ENCODE measurements at regions of chr5 and their contacts with region 1.

Region 1: DNA sequence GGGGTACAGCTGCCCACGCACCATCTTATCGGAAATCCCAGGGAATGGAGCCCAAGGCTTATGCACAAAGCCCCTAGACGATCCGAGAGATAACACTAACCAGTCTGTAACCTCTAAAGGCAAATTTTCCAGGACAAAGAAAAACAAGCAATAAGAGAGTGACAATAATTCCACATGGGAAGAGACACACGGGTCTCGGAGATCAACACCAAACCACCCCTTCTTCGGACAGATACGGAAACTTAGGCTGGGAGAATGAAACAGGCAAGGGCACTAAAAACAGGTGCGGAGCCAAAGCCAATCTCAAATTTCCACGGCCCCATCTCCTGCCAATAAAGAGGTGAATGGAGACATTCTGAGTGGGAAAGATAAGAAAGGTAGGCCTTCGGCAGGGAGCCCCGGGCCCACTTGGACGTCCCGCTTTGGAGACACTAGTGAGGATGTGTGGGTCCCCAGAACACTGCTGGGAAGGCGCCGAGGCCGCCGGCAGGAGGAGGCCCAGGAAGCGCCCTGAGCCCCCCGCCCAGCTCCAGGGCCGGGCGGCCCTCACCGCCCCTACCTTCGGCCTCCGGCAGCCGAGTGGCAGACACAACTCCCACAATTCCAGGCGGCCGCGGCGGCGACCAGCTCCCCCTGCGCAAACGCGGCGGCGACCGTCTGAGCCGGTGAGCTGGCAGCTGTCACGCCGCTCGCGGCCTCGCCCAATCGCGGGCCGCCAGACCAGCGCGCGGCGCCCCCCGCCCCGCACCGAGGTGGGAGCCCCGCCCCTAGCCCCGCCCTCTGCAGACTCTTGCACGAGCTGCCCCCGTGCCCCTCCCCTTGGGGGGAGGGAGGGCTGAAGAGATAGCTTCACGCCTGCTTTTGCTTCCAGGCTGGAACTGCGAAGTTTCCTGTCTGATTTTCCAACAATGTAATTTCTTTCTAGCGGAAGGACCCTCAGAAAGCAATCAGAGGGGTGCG is at the start of gene SIL1:
- DNase-seq: peak; percentile 95 to 97
- ATAC-seq: peak; percentile 91 to 93
- H3K4me3 ChIP-seq: peak within 1 kb of the TSS; percentile 78 to 89 (median 83)
- H3K27ac ChIP-seq: peak within 1 kb of the TSS; percentile 94 to 98 (median 97)
- H3K4me1 ChIP-seq: peaks cover 11 to 16% of the 10 kb centered on the region in 2 donors
- H3K27me3 ChIP-seq: no peaks in the 10 kb centered on the region
- CTCF ChIP-seq: peak in 1 of 5 experiments; percentile 13
- POLR2A ChIP-seq: peak; percentile 99
- total RNA-seq, gene SIL1: 36.6 to 52.6 (median 48.2) TPM

Region 2: GRCh38 chr5:138752951-138753793 is 444.8 kb before region 1 on chr5 and contains the start of gene CTNNA1:
- in situ Hi-C with region 1: no loop called
- intact Hi-C with region 1: loop called (anchors 2 kb)
- DNase-seq: peak; percentile 66 to 80
- ATAC-seq: peak; percentile 85 to 87
- H3K4me3 ChIP-seq: peak within 1 kb of the TSS; percentile 75 to 94 (median 79)
- H3K27ac ChIP-seq: peak within 1 kb of the TSS; percentile 87 to 100 (median 96)
- H3K4me1 ChIP-seq: peaks cover 13 to 22% of the 10 kb centered on the region in 2 donors
- H3K27me3 ChIP-seq: no peaks in the 10 kb centered on the region
- CTCF ChIP-seq: peak in 1 of 5 experiments; percentile 11
- POLR2A ChIP-seq: peak; percentile 76 to 84
- total RNA-seq, gene CTNNA1: 92.6 to 164 (median 114) TPM

Region 3: DNA sequence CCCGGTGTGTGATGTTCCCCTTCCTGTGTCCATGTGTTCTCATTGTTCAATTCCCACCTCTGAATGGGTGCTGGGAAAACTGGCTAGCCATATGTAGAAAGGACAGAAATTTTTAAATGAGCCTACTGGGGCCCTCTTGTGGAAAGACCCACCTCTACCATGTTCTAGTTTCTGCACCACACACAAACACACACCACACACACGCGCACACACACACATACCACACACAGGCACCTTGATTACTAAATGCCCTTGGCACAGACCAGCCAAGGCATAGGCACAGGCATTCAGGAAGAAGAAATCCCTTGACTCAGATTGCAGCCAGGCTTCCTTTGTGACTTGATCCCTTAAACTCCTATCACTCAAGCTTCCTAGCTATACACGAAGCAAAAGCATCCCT is 60.3 kb before region 1 on chr5:
- in situ Hi-C with region 1: no loop called
- intact Hi-C with region 1: loop called (anchors 2 kb)
- DNase-seq: peak; percentile 62 to 68
- ATAC-seq: peak; percentile 55 to 67
- H3K4me3 ChIP-seq: no peak overlapping the region
- H3K27ac ChIP-seq: peak overlapping the region; percentile 75 to 85 (median 83)
- H3K4me1 ChIP-seq: peaks cover 73 to 84% of the 10 kb centered on the region in 2 donors
- H3K27me3 ChIP-seq: no peaks in the 10 kb centered on the region
- CTCF ChIP-seq: peak in 2 of 5 experiments; percentile 31 to 34
- POLR2A ChIP-seq: no peak

Region 4: GRCh38 chr5:139177809-139178588 is 20.0 kb before region 1 on chr5:
- in situ Hi-C with region 1: no loop called
- intact Hi-C with region 1: loop called (anchors 1 kb)
- DNase-seq: peak; percentile 92 to 98
- ATAC-seq: peak; percentile 89
- H3K4me3 ChIP-seq: no peak overlapping the region
- H3K27ac ChIP-seq: peak overlapping the region; percentile 91 to 96 (median 93)
- H3K4me1 ChIP-seq: peaks cover 56 to 57% of the 10 kb centered on the region in 2 donors
- H3K27me3 ChIP-seq: no peaks in the 10 kb centered on the region
- CTCF ChIP-seq: no peak
- POLR2A ChIP-seq: peak in 1 of 2 donors; percentile 23

Region 5: DNA sequence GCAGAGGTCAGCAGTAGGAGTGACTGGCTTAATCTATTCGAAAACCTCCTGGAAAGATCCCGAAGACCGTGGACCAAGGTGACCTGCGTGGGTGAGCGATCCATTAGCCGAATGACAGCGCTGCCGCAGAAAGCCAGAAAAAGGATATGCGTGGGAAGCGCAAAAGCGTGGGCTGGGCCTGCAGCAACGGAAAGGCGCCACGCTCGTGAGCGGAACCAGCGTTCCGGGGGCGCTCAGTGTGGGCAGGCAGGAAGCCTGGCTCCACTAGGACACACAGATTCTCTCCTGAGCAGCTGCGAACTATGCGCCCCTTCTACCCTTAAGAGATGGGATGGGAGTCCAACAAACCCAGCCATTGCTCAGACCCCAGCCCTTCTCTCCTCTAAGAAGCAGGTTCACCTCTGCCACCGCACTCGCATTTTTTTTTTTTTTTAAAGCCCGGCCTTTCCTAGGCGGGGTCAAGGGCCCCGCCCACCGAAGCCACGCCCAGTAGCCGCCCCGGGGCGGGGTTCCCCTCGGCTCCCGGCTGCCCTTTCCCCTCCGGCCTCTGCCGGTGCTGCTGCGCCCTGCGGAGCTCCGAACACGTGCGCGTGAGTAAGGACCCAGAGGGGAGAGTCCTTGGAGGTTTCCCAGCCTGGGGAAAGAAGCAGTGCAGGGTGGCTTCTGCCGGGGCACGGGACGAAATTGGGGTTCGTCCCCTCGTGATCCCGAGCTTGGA is 75.7 kb after region 1 on chr5:
- in situ Hi-C with region 1: no loop called
- intact Hi-C with region 1: loop called (anchors 5 kb)
- DNase-seq: peak; percentile 86 to 90
- ATAC-seq: peak; percentile 79 to 83
- H3K4me3 ChIP-seq: peak overlapping the region; percentile 71 to 91 (median 76)
- H3K27ac ChIP-seq: peak overlapping the region; percentile 92 to 98 (median 97)
- H3K4me1 ChIP-seq: peaks cover 68 to 70% of the 10 kb centered on the region in 2 donors
- H3K27me3 ChIP-seq: no peaks in the 10 kb centered on the region
- CTCF ChIP-seq: peak in 4 of 5 experiments; percentile 20 to 51 (median 22)
- POLR2A ChIP-seq: peak; percentile 87 to 89